CD4-positive, alpha-beta memory T cell (primary cell): ENCODE measurements at regions of chrX and their contacts with region 1.

Region 1: GRCh38 chrX:49191033-49191871 is 5.1 kb upstream of the PRICKLE3 start:
- DNase-seq: peak; percentile 86 to 95 (median 93)
- H3K4me3 ChIP-seq: peak overlapping the region; percentile 52 to 74
- H3K4me3 Mint-ChIP-seq: peak overlapping the region; percentile 77 to 96 (median 91)
- H3K27ac ChIP-seq: peak overlapping the region; percentile 69
- H3K27ac Mint-ChIP-seq: peak overlapping the region; percentile 47 to 98 (median 94)
- H3K4me1 ChIP-seq: peaks cover 18% of the 10 kb centered on the region
- H3K4me1 Mint-ChIP-seq: peaks cover 17 to 27% (median 22%) of the 10 kb centered on the region in 4 donors
- H3K27me3 ChIP-seq: no peaks in the 10 kb centered on the region
- H3K27me3 Mint-ChIP-seq: no peaks in the 10 kb centered on the region

Region 2: DNA sequence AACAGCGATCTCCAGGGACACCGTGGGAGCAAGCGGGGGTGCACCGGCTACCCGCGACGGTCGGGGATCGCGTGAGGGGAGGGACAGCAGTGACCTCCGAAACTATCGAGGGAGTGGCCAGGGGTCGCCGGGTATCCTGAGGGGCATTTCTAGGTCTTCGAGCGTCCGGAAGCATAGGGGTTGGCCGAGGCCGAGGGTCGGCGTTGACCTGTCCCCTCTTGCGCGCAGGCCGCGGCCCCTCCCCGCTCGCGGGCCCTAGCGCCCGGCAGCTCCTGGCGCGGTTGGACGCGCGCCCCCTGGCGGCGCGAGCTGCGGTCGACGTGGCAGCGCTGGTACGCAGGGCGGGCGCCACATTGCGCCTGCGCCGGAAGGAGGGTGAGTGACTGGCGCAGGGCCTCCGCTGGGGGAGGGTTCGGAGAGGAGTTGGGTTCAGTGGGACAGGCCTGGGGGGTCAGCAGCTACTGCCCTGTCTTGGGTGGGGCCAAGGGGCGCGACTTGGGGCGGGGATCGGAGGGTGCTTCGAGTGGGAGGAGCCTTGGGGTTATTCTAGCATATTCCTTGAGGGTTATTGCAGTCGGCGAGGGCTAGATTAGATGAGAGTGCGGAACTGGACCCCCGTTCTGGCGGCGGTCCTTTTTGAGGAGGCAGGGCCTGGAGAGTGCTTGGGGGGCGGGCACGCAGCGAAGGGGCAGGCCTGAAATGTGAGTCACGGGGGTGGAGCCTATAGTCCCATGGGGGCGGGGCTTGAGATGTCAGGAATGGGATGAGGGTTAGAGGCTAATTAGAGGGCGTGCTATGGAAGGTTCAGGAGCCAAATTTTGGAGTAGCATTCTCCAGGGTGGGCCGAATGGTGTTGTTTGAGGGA is 27.5 kb before region 1 on chrX:
- CTCF ChIA-PET with region 1: interaction called, 27 read pairs
- POLR2A ChIA-PET with region 1: interaction called, 26 read pairs
- intact Hi-C with region 1: loop called (anchors 5 kb)
- DNase-seq: peak; percentile 81 to 84 (median 82)
- H3K4me3 ChIP-seq: peak overlapping the region in 1 of 2 donors; percentile 50
- H3K4me3 Mint-ChIP-seq: peak overlapping the region; percentile 70 to 88 (median 80)
- H3K27ac ChIP-seq: peak overlapping the region; percentile 58
- H3K27ac Mint-ChIP-seq: peak overlapping the region; percentile 83 to 95 (median 92)
- H3K4me1 ChIP-seq: peaks cover 41% of the 10 kb centered on the region
- H3K4me1 Mint-ChIP-seq: peaks cover 14 to 41% (median 29%) of the 10 kb centered on the region in 4 donors
- H3K27me3 ChIP-seq: no peaks in the 10 kb centered on the region
- H3K27me3 Mint-ChIP-seq: no peaks in the 10 kb centered on the region

Region 3: DNA sequence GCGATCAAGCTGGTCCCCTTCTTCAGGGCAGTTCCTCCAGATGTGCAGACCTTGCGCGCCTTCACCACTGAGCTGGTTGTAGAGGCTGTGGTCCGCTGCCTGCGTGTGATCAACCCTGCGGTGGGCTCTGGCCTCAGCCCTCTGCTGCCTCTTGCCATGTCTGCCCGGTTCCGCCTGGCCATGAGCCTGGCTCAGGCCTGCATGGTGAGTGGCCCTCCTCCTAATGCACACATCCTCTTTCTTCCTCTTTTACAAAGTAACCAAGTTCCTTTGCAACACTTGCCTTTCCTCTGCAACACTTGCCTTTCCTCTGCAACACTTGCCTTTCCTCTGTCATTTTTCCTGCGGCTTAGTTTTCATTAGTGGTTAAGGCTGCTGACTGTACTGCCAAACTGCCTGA is 45.8 kb after region 1 on chrX:
- CTCF ChIA-PET with region 1: no interaction called
- POLR2A ChIA-PET with region 1: interaction called, 3 read pairs
- intact Hi-C with region 1: loop called (anchors 5 kb)
- DNase-seq: no peak
- H3K4me3 ChIP-seq: no peak overlapping the region
- H3K4me3 Mint-ChIP-seq: peak overlapping the region; percentile 66 to 95 (median 80)
- H3K27ac ChIP-seq: no peak overlapping the region
- H3K27ac Mint-ChIP-seq: peak overlapping the region; percentile 5 to 77 (median 69)
- H3K4me1 ChIP-seq: peaks cover 22% of the 10 kb centered on the region
- H3K4me1 Mint-ChIP-seq: peaks cover 18 to 42% (median 24%) of the 10 kb centered on the region in 4 donors
- H3K27me3 ChIP-seq: no peaks in the 10 kb centered on the region
- H3K27me3 Mint-ChIP-seq: no peaks in the 10 kb centered on the region

Region 4: GRCh38 chrX:49276671-49277534 is 85.7 kb after region 1 on chrX:
- CTCF ChIA-PET with region 1: interaction called, 15 read pairs
- POLR2A ChIA-PET with region 1: interaction called, 11 read pairs
- intact Hi-C with region 1: no loop called
- DNase-seq: no peak
- H3K4me3 ChIP-seq: no peak overlapping the region
- H3K4me3 Mint-ChIP-seq: peak overlapping the region; percentile 25 to 76 (median 66)
- H3K27ac ChIP-seq: peak overlapping the region; percentile 17
- H3K27ac Mint-ChIP-seq: peak overlapping the region; percentile 77 to 95 (median 89)
- H3K4me1 ChIP-seq: peaks cover 92% of the 10 kb centered on the region
- H3K4me1 Mint-ChIP-seq: peaks cover 53 to 91% (median 74%) of the 10 kb centered on the region in 4 donors
- H3K27me3 ChIP-seq: no peaks in the 10 kb centered on the region
- H3K27me3 Mint-ChIP-seq: no peaks in the 10 kb centered on the region

Region 5: GRCh38 chrX:49754233-49754857 is 563.1 kb after region 1 on chrX:
- CTCF ChIA-PET with region 1: interaction called, 8 read pairs
- POLR2A ChIA-PET with region 1: no interaction called
- intact Hi-C with region 1: loop called (anchors 1 kb)
- DNase-seq: peak in 4 of 5 donors; percentile 47 to 51 (median 49)
- H3K4me3 ChIP-seq: no peak overlapping the region
- H3K4me3 Mint-ChIP-seq: no peak overlapping the region
- H3K27ac ChIP-seq: no peak overlapping the region
- H3K27ac Mint-ChIP-seq: no peak overlapping the region
- H3K4me1 ChIP-seq: no peaks in the 10 kb centered on the region
- H3K4me1 Mint-ChIP-seq: peaks cover 0 to 2% (median 0%) of the 10 kb centered on the region in 4 donors
- H3K27me3 ChIP-seq: no peaks in the 10 kb centered on the region
- H3K27me3 Mint-ChIP-seq: peaks cover 0 to 3% of the 10 kb centered on the region in 2 donors

Region 6: GRCh38 chrX:49826021-49826420 is 634.8 kb after region 1 on chrX:
- CTCF ChIA-PET with region 1: no interaction called
- POLR2A ChIA-PET with region 1: no interaction called
- intact Hi-C with region 1: no loop called
- DNase-seq: no peak
- H3K4me3 ChIP-seq: no peak overlapping the region
- H3K4me3 Mint-ChIP-seq: no peak overlapping the region
- H3K27ac ChIP-seq: no peak overlapping the region
- H3K27ac Mint-ChIP-seq: no peak overlapping the region
- H3K4me1 ChIP-seq: no peaks in the 10 kb centered on the region
- H3K4me1 Mint-ChIP-seq: no peaks in the 10 kb centered on the region
- H3K27me3 ChIP-seq: no peaks in the 10 kb centered on the region
- H3K27me3 Mint-ChIP-seq: peaks cover 2 to 10% of the 10 kb centered on the region in 2 donors